Gastrocnemius medialis (tissue), 4 donors: ENCODE measurements at regions of chr13 and their contacts with region 1.

Region 1: GRCh38 chr13:32019612-32020233 is 11.9 kb upstream of the FRY start:
- DNase-seq: peak in 1 of 2 donors; percentile 8
- ATAC-seq: peak in 1 of 2 donors; percentile 71
- H3K4me3 ChIP-seq: no peak overlapping the region
- H3K27ac ChIP-seq: no peak overlapping the region
- H3K4me1 ChIP-seq: peaks cover 0 to 8% of the 10 kb centered on the region in 2 donors
- H3K27me3 ChIP-seq: no peaks in the 10 kb centered on the region
- CTCF ChIP-seq: peak; percentile 41 to 70 (median 52)
- POLR2A ChIP-seq: no peak

Region 2: GRCh38 chr13:31919971-31920726 is 99.6 kb before region 1 on chr13:
- in situ Hi-C with region 1: no loop called
- intact Hi-C with region 1: no loop called
- DNase-seq: no peak
- ATAC-seq: no peak
- H3K4me3 ChIP-seq: no peak overlapping the region
- H3K27ac ChIP-seq: no peak overlapping the region
- H3K4me1 ChIP-seq: no peaks in the 10 kb centered on the region
- H3K27me3 ChIP-seq: no peaks in the 10 kb centered on the region
- CTCF ChIP-seq: no peak
- POLR2A ChIP-seq: no peak

Region 3: GRCh38 chr13:32315238-32316027 is 295.7 kb after region 1 on chr13 and contains the starts of genes BRCA2 and ZAR1L:
- in situ Hi-C with region 1: loop called in 1 of 4 experiments (anchors 25 kb)
- intact Hi-C with region 1: loop called (anchors 5 kb)
- DNase-seq: peak; percentile 71 to 78
- ATAC-seq: peak; percentile 94 to 95
- H3K4me3 ChIP-seq: peak within 1 kb of the TSS; percentile 63 to 89 (median 76)
- H3K27ac ChIP-seq: peak within 1 kb of the TSS; percentile 84 to 92 (median 90)
- H3K4me1 ChIP-seq: peaks cover 0 to 3% of the 10 kb centered on the region in 2 donors
- H3K27me3 ChIP-seq: no peaks in the 10 kb centered on the region
- CTCF ChIP-seq: peak in 1 of 5 experiments; percentile 9
- POLR2A ChIP-seq: peak; percentile 54 to 70
- total RNA-seq, gene BRCA2: 0.02 to 0.20 (median 0.12) TPM
- total RNA-seq, gene ZAR1L: not detected